ENCODE measurements at regions of chr19 and their contacts with region 1.

Region 1: DNA sequence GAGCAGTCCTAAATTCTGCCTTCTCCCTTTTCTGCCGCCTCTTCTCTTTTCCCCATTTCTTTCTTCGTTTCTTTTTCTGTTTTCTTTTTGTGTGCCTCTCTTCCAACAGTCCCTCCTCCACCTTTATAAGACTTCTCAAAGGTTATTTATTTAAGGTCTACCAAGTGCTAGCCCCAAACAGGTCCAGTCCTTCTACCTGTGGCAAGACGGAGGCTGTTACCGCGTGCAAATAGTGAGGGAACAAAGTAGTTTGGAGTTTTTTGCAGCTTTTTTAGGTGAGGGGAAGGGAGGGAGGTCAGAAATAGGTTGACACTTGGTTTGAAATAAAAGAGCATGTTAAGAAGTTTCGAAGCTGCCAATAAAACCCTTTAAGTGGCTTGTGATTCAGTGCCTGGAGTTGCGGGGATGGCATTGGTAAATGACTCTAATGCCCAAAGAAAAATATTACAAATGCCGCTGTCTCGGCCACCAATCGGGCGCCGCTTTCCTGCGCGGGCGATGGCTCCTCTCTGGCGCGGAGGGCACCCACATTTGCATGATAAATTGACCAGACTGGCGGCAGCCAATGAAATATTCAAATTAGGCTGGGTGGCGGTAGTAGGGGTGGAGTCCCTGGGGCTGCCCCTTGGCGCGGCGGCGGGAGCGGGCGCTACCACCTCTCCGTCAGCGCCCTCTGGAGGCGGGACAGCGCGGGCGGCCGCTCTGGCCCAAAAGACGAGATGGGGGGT is 7.5 kb upstream of the TSHZ3 start:
- DNase-seq: peak; percentile 45
- H3K4me3 Mint-ChIP-seq: no peak overlapping the region
- H3K27ac Mint-ChIP-seq: peak overlapping the region; percentile 48
- H3K4me1 Mint-ChIP-seq: peaks cover 33% of the 10 kb centered on the region
- H3K27me3 Mint-ChIP-seq: peaks cover 65% of the 10 kb centered on the region

Region 2: DNA sequence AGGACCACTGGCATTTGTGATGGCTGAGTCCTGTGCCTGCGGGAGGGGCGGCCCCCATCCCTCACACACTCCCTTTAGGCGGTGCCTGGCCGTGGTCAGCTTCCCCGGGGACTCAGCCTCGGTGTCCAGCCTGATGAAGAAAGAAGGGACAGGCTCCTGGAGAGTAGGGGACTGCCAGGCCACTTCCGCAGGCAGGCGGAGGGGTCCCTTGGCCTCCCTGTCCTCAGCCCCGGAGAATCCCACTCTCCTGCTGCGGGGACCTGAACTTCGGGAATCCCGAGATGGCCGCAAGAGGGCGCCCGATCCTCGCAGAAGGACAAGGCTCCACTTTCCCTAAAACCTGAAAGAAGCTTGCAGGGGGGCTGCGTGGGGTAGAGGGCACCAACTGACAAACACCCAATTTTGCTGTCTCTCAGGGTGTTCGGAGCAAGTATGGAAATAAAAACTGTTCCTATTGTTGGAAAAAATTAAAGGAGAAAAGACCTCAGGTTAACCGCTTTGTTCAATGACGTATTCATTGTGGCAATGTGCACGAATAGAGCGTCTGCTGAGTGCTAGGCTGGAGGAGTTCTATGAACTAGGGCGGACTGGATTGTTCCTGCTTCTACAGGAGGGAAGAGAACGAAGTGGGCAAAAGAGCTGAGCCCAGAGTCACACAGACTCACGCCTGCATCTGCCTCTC is 687.3 kb before region 1 on chr19:
- intact Hi-C with region 1: loop called (anchors 1 kb)
- DNase-seq: peak; percentile 8
- H3K4me3 Mint-ChIP-seq: no peak overlapping the region
- H3K27ac Mint-ChIP-seq: no peak overlapping the region
- H3K4me1 Mint-ChIP-seq: no peaks in the 10 kb centered on the region
- H3K27me3 Mint-ChIP-seq: no peaks in the 10 kb centered on the region

Region 3: DNA sequence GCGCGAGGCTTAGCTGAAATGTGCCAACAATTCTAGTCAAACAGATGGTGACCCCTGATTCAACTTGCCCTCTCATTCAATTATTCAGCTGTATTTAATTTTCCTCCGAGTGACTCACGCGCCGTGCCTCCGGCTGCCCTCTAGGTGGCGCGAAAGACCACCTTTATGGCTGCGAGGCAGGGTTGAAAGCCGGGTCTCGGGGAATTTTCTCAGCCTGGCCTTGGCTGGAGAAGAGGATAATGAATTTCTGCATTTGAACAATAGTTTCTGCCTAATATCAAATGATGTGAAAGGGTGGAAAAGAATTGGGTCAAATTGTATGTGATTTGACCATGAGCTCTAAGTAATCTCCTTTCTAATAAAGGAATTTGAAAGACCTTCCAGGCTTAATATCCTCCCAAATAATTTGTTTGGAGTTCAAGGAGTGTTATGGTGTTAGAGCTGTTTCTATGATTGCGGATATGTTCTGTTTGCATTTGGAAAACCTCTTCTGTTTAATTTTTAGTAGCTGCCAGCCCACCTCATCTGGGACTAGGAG is 673.7 kb before region 1 on chr19:
- intact Hi-C with region 1: loop called (anchors 2 kb)
- DNase-seq: no peak
- H3K4me3 Mint-ChIP-seq: no peak overlapping the region
- H3K27ac Mint-ChIP-seq: no peak overlapping the region
- H3K4me1 Mint-ChIP-seq: no peaks in the 10 kb centered on the region
- H3K27me3 Mint-ChIP-seq: peaks cover 11% of the 10 kb centered on the region

Region 4: DNA sequence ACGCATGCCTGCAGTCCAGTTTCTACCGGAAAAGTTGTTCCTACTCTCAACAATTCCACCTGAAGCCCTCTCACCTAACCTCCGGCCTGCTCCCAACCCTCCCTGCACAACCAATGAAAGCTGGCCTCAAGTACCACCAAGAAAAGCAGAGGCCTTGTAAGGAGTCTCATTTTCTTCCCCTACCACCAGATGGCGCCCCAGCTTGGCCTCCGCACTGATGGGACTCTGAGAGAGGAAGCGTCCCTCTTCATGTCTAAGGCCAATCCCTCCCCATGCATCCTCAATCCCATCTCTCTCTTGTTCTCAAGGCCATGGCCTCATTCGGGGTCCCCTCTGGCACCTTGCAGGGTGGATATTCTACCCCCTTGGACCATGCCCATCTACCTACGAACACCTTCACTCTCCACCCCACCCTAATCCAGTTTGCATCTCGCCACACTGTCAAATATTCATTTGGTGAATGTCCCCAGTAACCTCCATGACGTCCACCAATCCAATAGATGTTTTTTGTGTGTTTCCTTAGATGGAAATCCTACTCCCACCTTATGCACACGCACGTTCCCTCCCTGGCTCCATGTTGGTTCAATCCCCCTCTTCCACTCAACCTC is 571.8 kb before region 1 on chr19:
- intact Hi-C with region 1: loop called (anchors 1 kb)
- DNase-seq: peak; percentile 26
- H3K4me3 Mint-ChIP-seq: no peak overlapping the region
- H3K27ac Mint-ChIP-seq: no peak overlapping the region
- H3K4me1 Mint-ChIP-seq: no peaks in the 10 kb centered on the region
- H3K27me3 Mint-ChIP-seq: no peaks in the 10 kb centered on the region

Region 5: DNA sequence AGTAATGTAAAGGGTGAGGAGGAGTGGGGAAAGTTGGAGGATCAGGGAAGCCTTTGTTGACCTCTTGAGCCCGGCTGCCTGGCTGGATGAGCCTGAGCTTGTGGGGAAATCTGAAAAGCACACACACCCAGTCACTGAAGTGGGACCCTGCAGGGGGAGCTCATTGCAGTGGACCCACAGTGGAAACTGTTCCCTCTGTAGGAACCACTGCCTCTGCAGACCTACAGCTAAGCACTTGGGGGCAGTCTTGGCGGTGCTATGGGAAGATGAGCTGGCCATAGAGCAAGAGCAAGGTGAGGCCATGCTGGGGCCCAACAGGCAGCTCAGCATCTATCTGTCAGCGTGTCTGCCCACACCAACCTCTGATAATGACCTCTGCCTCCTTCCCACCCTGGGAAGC is 302.3 kb before region 1 on chr19:
- intact Hi-C with region 1: loop called (anchors 1 kb)
- DNase-seq: peak; percentile 2
- H3K4me3 Mint-ChIP-seq: no peak overlapping the region
- H3K27ac Mint-ChIP-seq: no peak overlapping the region
- H3K4me1 Mint-ChIP-seq: no peaks in the 10 kb centered on the region
- H3K27me3 Mint-ChIP-seq: no peaks in the 10 kb centered on the region

Region 6: GRCh38 chr19:31110331-31110730 is 246.4 kb before region 1 on chr19:
- intact Hi-C with region 1: loop called (anchors 5 kb)
- DNase-seq: no peak
- H3K4me3 Mint-ChIP-seq: no peak overlapping the region
- H3K27ac Mint-ChIP-seq: no peak overlapping the region
- H3K4me1 Mint-ChIP-seq: peaks cover 9% of the 10 kb centered on the region
- H3K27me3 Mint-ChIP-seq: peaks cover 6% of the 10 kb centered on the region